Heart left ventricle (tissue), 16 donors: ENCODE measurements at regions of chr3 and their contacts with region 1.

Region 1: GRCh38 chr3:129627429-129628168 is 21.1 kb upstream of the PLXND1 start:
- DNase-seq: peak; percentile 75 to 83 (median 81)
- ATAC-seq: peak; percentile 25 to 58 (median 52)
- H3K4me3 ChIP-seq: peak overlapping the region; percentile 45 to 75 (median 62)
- H3K27ac ChIP-seq: peak overlapping the region; percentile 91 to 100 (median 98)
- H3K4me1 ChIP-seq: peaks cover 17 to 64% (median 50%) of the 10 kb centered on the region in 12 donors
- H3K27me3 ChIP-seq: no peaks in the 10 kb centered on the region
- CTCF ChIP-seq: peak; percentile 64 to 93 (median 84)
- POLR2A ChIP-seq: no peak

Region 2: DNA sequence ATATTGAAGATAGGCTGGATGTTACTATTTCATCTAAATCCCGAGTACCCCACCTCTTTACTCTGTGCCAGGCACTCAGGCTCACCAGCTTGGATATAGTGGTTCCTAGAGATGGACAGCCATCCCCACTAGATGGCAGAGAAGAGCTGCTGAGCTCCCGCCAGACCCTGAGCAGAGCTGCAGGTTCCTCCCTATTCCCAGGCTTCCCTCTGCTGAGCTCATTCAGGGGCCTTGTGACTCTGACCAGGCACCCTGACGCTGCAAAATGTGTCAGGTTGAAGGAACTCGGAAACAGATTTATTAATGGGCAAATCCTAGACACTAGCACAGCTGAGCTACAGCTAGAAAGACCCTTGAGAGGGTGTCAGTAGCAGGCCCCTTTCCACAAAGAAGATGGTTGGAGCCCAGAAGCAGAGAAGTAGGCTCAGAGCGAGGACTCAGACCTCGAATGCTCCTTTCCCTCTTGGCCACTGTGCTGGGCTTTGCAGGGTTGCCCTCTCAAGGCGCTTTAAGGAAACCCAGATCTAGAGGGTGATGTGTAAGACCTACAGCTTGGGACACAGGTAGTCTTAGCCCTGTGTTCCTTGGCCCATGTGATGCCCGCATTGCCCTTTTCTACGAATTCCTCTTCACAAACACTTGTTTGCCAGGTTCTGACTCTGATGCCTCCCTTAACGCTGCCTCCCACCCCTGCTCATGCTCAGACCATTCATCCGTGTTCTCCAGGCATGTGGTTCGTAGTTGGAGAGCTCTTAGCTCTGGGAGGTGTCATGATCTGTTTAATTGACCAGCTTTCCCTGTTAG is 137.2 kb before region 1 on chr3:
- intact Hi-C with region 1: loop called in 8 of 10 experiments (anchors 1 to 5 kb)
- DNase-seq: peak; percentile 87 to 89 (median 88)
- ATAC-seq: peak; percentile 88 to 93 (median 90)
- H3K4me3 ChIP-seq: no peak overlapping the region
- H3K27ac ChIP-seq: peak overlapping the region in 11 of 12 donors; percentile 48 to 89 (median 74)
- H3K4me1 ChIP-seq: peaks cover 3 to 59% (median 29%) of the 10 kb centered on the region in 12 donors
- H3K27me3 ChIP-seq: no peaks in the 10 kb centered on the region
- CTCF ChIP-seq: peak; percentile 84 to 97 (median 92)
- POLR2A ChIP-seq: peak in 1 of 2 donors; percentile 31

Region 3: GRCh38 chr3:129596194-129597086 is 31.2 kb before region 1 on chr3:
- intact Hi-C with region 1: loop called in 1 of 10 experiments (anchors 2 kb)
- DNase-seq: peak; percentile 93 to 96 (median 94)
- ATAC-seq: peak; percentile 70 to 86 (median 83)
- H3K4me3 ChIP-seq: peak overlapping the region in 11 of 12 donors; percentile 7 to 99 (median 34)
- H3K27ac ChIP-seq: peak overlapping the region; percentile 75 to 97 (median 90)
- H3K4me1 ChIP-seq: peaks cover 31 to 100% (median 95%) of the 10 kb centered on the region in 12 donors
- H3K27me3 ChIP-seq: no peaks in the 10 kb centered on the region
- CTCF ChIP-seq: peak in 2 of 12 donors; percentile 1 to 5
- POLR2A ChIP-seq: no peak

Region 4: GRCh38 chr3:129824926-129825541 is 197.4 kb after region 1 on chr3:
- intact Hi-C with region 1: loop called (anchors 1 to 5 kb)
- DNase-seq: peak in 2 of 5 donors; percentile 28 to 46
- ATAC-seq: peak in 3 of 4 donors; percentile 51 to 60 (median 54)
- H3K4me3 ChIP-seq: no peak overlapping the region
- H3K27ac ChIP-seq: no peak overlapping the region
- H3K4me1 ChIP-seq: peaks cover 0 to 62% (median 4%) of the 10 kb centered on the region in 12 donors
- H3K27me3 ChIP-seq: no peaks in the 10 kb centered on the region
- CTCF ChIP-seq: peak; percentile 61 to 80 (median 71)
- POLR2A ChIP-seq: no peak